AG04449 (cell line): ENCODE measurements at regions of chr6 and their contacts with region 1.

Region 1: GRCh38 chr6:149028767-149029405 is 282.1 kb downstream of the UST start:
- DNase-seq: peak; percentile 80
- H3K4me3 ChIP-seq: no peak overlapping the region
- CTCF ChIP-seq: peak; percentile 15

Region 2: DNA sequence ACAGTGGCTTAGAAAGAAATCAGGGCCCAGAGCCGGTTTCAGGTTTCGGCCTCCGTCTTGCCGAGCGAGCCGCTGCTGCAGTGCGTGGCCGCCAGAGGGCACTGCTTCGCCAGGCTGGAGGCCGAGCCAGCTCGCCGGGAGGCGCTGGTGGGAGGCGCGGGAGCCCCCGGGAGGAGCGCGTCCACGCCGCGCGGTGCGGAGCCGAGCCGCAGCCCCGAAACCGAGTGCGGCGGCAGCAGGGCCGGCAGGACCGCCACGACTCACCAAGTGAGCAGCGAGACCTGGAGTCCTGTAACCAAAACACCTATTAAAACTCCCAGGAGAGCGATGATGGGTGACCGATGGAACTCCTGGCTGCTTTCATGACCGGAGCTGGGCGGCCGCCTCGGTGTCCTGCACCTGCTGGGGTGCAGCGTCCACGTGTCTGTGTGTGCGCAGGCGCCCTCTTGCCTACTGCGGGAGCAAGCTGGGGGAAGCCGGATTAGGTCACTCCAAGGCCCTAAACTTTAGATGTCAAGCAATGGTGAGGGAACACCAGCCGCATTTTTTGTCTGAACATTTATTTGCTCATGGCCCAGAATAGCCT is 468.9 kb before region 1 on chr6:
- CTCF ChIA-PET with region 1: interaction called, 105 read pairs
- POLR2A ChIA-PET with region 1: no interaction called
- DNase-seq: no peak
- H3K4me3 ChIP-seq: peak overlapping the region; percentile 59
- CTCF ChIP-seq: peak; percentile 98

Region 3: GRCh38 chr6:148578245-148578732 is 450.6 kb before region 1 on chr6:
- CTCF ChIA-PET with region 1: interaction called, 58 read pairs
- POLR2A ChIA-PET with region 1: no interaction called
- DNase-seq: peak; percentile 24
- H3K4me3 ChIP-seq: no peak overlapping the region
- CTCF ChIP-seq: peak; percentile 90

Region 4: GRCh38 chr6:148997865-148998264 is 31.0 kb before region 1 on chr6:
- CTCF ChIA-PET with region 1: interaction called, 13 read pairs
- POLR2A ChIA-PET with region 1: interaction called, 6 read pairs
- DNase-seq: peak; percentile 90
- H3K4me3 ChIP-seq: no peak overlapping the region
- CTCF ChIP-seq: no peak

Region 5: DNA sequence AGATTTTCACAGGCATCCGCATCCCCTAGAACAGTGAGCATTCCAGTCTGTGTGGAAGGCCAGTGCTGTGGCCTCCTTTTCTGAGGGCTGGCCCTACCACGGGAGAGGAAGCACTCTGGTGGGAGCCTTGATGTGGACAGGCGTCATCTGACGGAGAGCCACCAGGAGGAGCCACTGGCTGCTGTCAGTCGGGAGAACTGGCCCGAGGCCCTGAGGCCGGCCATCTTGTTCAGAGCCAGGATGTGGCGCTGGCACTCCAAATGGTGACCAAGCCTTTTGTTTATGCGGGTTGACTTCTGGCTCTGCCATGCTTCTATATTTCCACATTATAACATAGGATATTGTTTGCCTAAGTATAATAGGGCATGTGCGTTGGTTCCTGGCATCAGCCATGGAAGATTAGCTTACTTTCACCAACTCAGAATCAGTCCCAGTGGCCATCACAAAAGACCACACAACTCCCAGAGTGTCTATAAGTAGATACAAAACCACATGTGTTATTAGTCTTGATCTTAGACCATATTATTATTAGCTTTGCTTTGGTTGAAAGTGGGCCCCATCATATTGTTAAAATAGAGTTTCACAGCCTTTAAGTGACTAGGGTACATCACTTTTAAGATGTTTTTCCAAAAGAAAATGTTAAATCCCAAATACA is 14.7 kb after region 1 on chr6:
- CTCF ChIA-PET with region 1: interaction called, 20 read pairs
- POLR2A ChIA-PET with region 1: interaction called, 4 read pairs
- DNase-seq: no peak
- H3K4me3 ChIP-seq: no peak overlapping the region
- CTCF ChIP-seq: peak; percentile 8

Region 6: DNA sequence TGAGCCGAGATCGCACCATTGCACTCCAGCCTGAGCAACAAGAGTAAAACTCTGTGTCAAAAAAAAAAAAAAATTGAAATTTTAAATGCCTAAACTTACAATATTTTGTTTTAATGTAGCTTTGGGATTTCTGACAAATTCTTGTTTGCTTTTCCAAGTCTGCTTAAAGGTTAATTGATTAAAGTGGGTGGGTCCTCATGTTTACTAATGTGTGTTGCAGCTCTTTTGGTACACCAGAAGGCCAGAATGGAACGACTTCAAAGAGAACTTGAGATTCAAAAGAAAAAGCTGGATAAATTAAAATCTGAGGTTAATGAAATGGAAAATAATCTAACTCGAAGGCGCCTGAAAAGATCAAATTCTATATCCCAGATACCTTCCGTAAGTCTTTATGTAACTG is 368.5 kb after region 1 on chr6:
- CTCF ChIA-PET with region 1: interaction called, 11 read pairs
- POLR2A ChIA-PET with region 1: no interaction called
- DNase-seq: no peak
- H3K4me3 ChIP-seq: no peak overlapping the region
- CTCF ChIP-seq: no peak

Region 7: GRCh38 chr6:149513915-149514314 is 485.0 kb after region 1 on chr6:
- CTCF ChIA-PET with region 1: interaction called, 136 read pairs
- POLR2A ChIA-PET with region 1: no interaction called
- DNase-seq: no peak
- H3K4me3 ChIP-seq: no peak overlapping the region
- CTCF ChIP-seq: no peak